ENCODE measurements at regions of chr10 and their contacts with region 1.

Region 1: DNA sequence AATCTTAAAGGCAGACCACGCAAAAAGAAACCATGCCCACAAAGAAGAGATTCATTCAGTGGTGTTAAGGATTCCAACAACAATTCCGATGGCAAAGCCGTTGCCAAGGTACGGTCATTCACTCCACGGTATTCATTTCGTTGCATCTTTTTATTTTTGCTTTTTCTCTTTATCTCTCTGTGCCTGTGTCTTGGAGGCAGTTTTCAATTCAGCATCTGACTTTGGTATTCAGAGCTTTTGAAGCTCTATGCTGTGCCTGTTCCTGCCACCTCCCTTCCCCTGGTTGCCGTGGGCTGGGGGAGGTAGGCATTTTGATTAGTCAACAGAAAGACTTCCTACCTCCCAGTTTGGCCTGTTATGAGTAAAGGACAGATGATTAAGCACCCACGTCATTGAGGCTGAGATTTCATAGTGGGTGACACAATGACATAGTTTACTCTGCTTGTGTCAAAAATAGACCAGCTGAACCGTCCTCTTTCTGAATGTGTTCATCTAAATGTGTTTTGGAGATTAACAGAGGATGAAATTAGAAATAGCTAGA is 149.5 kb downstream of the ARID5B start:
- DNase-seq: no peak
- H3K4me3 ChIP-seq: peak overlapping the region; percentile 53 to 65 (median 58)
- H3K27ac ChIP-seq: peak overlapping the region; percentile 89 to 95 (median 93)
- H3K4me1 ChIP-seq: peaks cover 0 to 78% (median 75%) of the 10 kb centered on the region in 4 donors
- H3K27me3 ChIP-seq: no peaks in the 10 kb centered on the region
- CTCF ChIP-seq: no peak
- EP300 ChIP-seq: peak in 3 of 4 donors; percentile 17 to 53 (median 23)
- POLR2A ChIP-seq: no peak

Region 2: GRCh38 chr10:61662794-61663259 is 388.1 kb before region 1 on chr10 and contains the start of gene CABCOCO1:
- intact Hi-C with region 1: loop called (anchors 10 kb)
- DNase-seq: peak; percentile 83
- H3K4me3 ChIP-seq: peak within 1 kb of the TSS; percentile 52 to 70 (median 64)
- H3K27ac ChIP-seq: peak within 1 kb of the TSS; percentile 61 to 82 (median 75)
- H3K4me1 ChIP-seq: peaks cover 0 to 7% (median 3%) of the 10 kb centered on the region in 4 donors
- H3K27me3 ChIP-seq: no peaks in the 10 kb centered on the region
- CTCF ChIP-seq: no peak
- EP300 ChIP-seq: no peak
- POLR2A ChIP-seq: no peak
- total RNA-seq, gene CABCOCO1: 0.36 to 3.1 (median 1.2) TPM

Region 3: DNA sequence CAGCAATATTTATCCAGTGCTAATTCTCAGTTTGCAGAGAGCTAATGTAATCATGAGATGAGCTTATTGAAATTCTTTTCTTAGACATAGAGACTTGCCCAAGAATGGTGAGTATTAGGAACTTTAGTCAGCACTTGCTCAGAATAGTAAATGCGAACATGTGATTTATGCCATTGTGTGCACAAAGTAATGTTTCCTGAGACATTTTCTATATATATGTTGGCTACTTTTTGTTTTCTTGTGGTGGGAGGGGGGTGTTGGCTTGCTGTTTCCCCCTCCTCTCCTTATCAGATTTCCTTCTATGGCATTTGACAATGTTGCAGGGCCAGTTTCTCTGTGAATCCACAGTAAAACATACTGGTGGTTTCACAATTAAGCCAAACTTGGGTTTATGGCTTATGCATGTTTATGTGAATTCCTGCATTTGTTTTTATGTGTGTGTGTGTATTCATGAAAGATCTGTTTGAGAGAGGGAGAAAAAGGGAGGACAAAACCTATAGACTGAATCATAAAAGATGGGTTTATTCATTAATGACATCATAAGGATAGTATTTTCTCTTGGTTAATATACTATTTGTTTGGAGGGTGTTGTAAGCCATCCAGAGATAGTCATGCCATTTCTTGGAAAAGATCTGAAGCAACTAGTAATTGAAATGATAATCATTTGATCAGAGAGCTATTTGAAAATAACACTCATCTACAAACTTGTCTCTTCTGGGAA is 113.2 kb before region 1 on chr10:
- intact Hi-C with region 1: loop called (anchors 5 kb)
- DNase-seq: no peak
- H3K4me3 ChIP-seq: no peak overlapping the region
- H3K27ac ChIP-seq: peak overlapping the region; percentile 61 to 84 (median 71)
- H3K4me1 ChIP-seq: peaks cover 0 to 80% (median 58%) of the 10 kb centered on the region in 4 donors
- H3K27me3 ChIP-seq: no peaks in the 10 kb centered on the region
- CTCF ChIP-seq: no peak
- EP300 ChIP-seq: no peak
- POLR2A ChIP-seq: no peak

Region 4: GRCh38 chr10:62025901-62026879 is 24.8 kb before region 1 on chr10:
- intact Hi-C with region 1: no loop called
- DNase-seq: no peak
- H3K4me3 ChIP-seq: no peak overlapping the region
- H3K27ac ChIP-seq: no peak overlapping the region
- H3K4me1 ChIP-seq: peaks cover 0 to 17% (median 12%) of the 10 kb centered on the region in 4 donors
- H3K27me3 ChIP-seq: no peaks in the 10 kb centered on the region
- CTCF ChIP-seq: no peak
- EP300 ChIP-seq: no peak
- POLR2A ChIP-seq: no peak

Region 5: DNA sequence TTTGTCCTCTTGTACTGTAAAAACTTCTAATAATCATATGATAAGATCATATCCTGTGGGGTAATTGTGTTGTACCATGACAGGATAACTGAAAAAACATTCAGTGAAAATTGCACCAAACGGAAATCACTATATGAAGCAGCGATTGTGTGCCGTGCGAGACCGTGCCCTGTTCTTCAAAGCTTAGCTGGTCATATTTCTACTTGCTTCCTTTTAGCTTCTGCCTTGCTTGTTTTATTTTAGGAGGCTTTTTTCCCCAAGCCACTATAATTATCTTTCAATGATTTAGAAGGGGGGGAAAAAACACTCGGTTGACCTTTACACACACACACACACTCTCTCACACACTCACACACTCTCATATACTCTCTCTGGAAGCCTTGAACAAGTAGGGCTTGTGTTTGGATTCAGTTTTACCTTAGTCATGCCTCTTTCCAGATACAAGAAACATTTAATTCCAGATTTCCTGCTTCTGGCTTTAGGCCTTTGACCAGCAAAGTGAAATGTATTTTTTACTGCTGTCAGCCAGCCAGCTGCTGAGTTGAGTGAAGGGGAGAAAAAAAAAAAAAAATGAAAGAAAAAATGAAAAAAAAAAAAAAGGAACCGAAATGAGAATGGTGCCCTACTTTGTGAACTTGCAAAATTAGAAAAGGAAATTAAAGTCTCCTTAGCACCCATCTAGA is 31.9 kb after region 1 on chr10:
- intact Hi-C with region 1: loop called (anchors 5 kb)
- DNase-seq: no peak
- H3K4me3 ChIP-seq: peak overlapping the region in 1 of 4 donors; percentile 21
- H3K27ac ChIP-seq: peak overlapping the region; percentile 77 to 84 (median 84)
- H3K4me1 ChIP-seq: peaks cover 0 to 76% (median 55%) of the 10 kb centered on the region in 4 donors
- H3K27me3 ChIP-seq: no peaks in the 10 kb centered on the region
- CTCF ChIP-seq: no peak
- EP300 ChIP-seq: no peak
- POLR2A ChIP-seq: no peak

Region 6: GRCh38 chr10:63003816-63004453 is 953.0 kb after region 1 on chr10:
- intact Hi-C with region 1: no loop called
- DNase-seq: no peak
- H3K4me3 ChIP-seq: no peak overlapping the region
- H3K27ac ChIP-seq: no peak overlapping the region
- H3K4me1 ChIP-seq: no peaks in the 10 kb centered on the region
- H3K27me3 ChIP-seq: no peaks in the 10 kb centered on the region
- CTCF ChIP-seq: no peak
- EP300 ChIP-seq: no peak
- POLR2A ChIP-seq: no peak

Region 7: DNA sequence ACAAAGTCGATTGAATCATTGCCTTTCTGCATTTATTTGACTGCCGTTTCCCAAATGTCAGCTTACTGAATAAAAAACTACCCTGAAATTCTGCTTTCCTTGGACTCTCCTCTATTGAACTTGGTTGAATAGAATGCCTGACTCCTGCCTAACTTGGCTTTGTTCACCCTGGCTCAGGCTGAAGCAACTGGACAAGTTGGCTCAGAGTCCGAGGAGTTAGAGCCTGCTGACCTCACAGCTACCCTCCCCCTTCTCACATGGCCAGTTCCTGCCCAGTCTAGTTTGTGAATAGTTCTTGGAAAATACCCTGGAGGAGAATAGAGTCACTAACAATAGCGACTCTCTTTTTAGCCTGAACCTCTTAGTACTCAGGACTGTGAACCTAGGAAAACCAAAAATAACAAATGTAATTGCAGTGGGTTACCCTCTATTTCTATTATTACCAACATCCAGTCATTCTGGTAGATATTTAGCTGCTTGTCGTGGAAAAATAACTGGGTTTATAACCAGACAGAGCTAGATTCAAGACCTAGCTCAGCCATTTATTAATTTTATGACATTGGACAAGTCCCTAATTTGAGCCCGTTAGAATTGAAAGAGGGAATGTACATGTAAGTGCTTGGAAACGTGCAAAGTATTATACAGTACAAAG is 1064.9 kb after region 1 on chr10:
- intact Hi-C with region 1: loop called (anchors 10 kb)
- DNase-seq: peak; percentile 94
- H3K4me3 ChIP-seq: no peak overlapping the region
- H3K27ac ChIP-seq: peak overlapping the region; percentile 70 to 80 (median 76)
- H3K4me1 ChIP-seq: peaks cover 0 to 33% (median 30%) of the 10 kb centered on the region in 4 donors
- H3K27me3 ChIP-seq: no peaks in the 10 kb centered on the region
- CTCF ChIP-seq: no peak
- EP300 ChIP-seq: peak in 2 of 4 donors; percentile 45 to 89
- POLR2A ChIP-seq: no peak

Measured in sigmoid colon (tissue), 7 donors.